Activated CD4-positive, alpha-beta memory T cell treated with anti-CD3 and anti-CD28 coated beads for 36 hours (primary cell): ENCODE measurements at regions of chr15 and their contacts with region 1.

Region 1: DNA sequence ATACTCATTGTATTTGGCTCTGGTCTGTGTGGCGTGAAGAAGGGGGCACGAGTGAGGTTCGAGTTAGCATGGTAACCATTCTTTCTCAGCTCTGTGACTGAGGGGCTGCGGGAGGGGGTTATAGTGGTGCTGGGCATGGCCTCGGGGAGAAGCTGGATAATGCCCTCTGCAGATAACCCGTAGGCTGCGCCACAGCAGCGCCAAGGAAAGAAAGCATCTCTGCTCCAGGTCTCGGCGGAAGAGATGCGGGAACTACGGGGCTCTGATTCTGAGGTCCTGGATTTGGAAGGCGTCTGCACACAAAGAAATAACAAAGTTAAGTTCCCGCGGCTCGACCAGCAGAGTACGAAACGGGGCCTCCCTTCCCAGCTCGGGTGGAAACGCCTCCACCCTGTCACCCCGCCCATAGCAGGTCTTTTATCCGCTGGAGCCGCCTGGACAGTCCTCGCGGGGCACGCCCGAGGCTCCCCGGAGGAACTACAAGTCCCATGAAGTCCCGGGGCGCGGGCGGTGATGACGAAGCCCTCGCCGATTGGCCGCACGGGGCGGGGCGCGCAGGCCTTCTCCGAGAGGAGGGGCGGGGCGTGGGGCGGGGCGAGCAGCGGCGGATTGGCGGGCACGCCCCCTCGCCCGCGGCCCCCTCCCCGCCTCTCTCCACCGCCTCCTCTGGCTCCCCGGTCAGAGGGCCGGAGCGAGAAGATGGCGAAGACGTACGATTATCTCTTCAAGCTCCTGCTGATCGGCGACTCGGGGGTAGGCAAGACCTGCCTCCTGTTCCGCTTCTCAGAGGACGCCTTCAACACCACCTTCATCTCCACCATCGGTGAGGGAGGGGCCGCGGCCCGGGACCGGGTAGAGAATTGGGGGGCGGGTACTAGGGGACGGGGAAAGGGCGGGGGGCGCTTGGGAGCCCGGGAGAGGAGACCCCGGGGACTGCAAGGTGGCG is at the start of gene RAB8B:
- DNase-seq: peak; percentile 99
- H3K4me3 Mint-ChIP-seq: peak within 1 kb of the TSS; percentile 93
- H3K27ac Mint-ChIP-seq: peak within 1 kb of the TSS; percentile 94
- H3K4me1 Mint-ChIP-seq: peaks cover 44% of the 10 kb centered on the region
- H3K27me3 Mint-ChIP-seq: no peaks in the 10 kb centered on the region
- total RNA-seq, gene RAB8B: 109 to 119 TPM

Region 2: DNA sequence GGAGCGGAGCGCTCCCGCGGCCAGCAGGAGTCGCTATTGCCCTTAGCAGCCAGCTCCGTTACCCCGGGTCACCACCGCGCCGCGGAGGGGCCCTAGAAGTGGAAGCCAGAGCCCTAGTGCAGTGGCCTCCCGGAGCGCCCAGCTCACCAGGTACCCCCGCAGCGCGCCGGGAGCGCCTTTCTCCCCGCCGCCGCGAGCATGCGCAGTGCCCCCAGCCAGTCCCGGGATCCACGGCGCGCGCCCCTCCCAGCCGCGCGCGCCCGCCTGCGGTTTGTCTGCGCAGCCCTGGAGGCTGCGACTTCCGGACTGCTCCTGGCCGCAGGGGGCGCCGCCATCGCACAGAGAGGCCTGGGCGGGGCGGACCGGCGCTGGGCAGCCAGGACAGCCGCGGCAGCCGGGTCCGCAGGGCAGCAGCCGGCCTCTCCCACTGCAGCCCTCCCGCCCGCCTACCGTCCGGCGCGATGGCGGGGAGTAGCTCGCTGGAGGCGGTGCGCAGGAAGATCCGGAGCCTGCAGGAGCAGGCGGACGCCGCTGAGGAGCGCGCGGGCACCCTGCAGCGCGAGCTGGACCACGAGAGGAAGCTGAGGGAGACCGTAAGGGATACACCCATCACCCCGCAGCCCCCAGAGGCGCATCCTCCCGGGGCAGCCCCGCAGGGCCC is 141.0 kb before region 1 on chr15:
- CTCF ChIA-PET with region 1: interaction called, 5 read pairs
- POLR2A ChIA-PET with region 1: interaction called, 3 read pairs
- intact Hi-C with region 1: loop called (anchors 2 kb)
- DNase-seq: peak; percentile 89
- H3K4me3 Mint-ChIP-seq: peak overlapping the region; percentile 91
- H3K27ac Mint-ChIP-seq: no peak overlapping the region
- H3K4me1 Mint-ChIP-seq: peaks cover 13% of the 10 kb centered on the region
- H3K27me3 Mint-ChIP-seq: peaks cover 33% of the 10 kb centered on the region

Region 3: GRCh38 chr15:63157118-63157843 is 31.9 kb before region 1 on chr15 and contains the start of gene RPS27L:
- CTCF ChIA-PET with region 1: interaction called, 6 read pairs
- POLR2A ChIA-PET with region 1: interaction called, 15 read pairs
- intact Hi-C with region 1: loop called (anchors 1 kb)
- DNase-seq: peak; percentile 93
- H3K4me3 Mint-ChIP-seq: peak within 1 kb of the TSS; percentile 96
- H3K27ac Mint-ChIP-seq: peak within 1 kb of the TSS; percentile 96
- H3K4me1 Mint-ChIP-seq: peaks cover 17% of the 10 kb centered on the region
- H3K27me3 Mint-ChIP-seq: no peaks in the 10 kb centered on the region
- total RNA-seq, gene RPS27L: 139 to 140 TPM

Region 4: GRCh38 chr15:63203451-63204090 is 14.4 kb after region 1 on chr15:
- CTCF ChIA-PET with region 1: interaction called, 3 read pairs
- POLR2A ChIA-PET with region 1: interaction called, 29 read pairs
- intact Hi-C with region 1: loop called (anchors 1 kb)
- DNase-seq: peak; percentile 73
- H3K4me3 Mint-ChIP-seq: no peak overlapping the region
- H3K27ac Mint-ChIP-seq: no peak overlapping the region
- H3K4me1 Mint-ChIP-seq: peaks cover 92% of the 10 kb centered on the region
- H3K27me3 Mint-ChIP-seq: no peaks in the 10 kb centered on the region

Region 5: GRCh38 chr15:63232405-63232804 is 43.2 kb after region 1 on chr15:
- CTCF ChIA-PET with region 1: interaction called, 4 read pairs
- POLR2A ChIA-PET with region 1: interaction called, 15 read pairs
- intact Hi-C with region 1: loop called (anchors 1 kb)
- DNase-seq: no peak
- H3K4me3 Mint-ChIP-seq: no peak overlapping the region
- H3K27ac Mint-ChIP-seq: peak overlapping the region; percentile 79
- H3K4me1 Mint-ChIP-seq: peaks cover 75% of the 10 kb centered on the region
- H3K27me3 Mint-ChIP-seq: no peaks in the 10 kb centered on the region

Region 6: DNA sequence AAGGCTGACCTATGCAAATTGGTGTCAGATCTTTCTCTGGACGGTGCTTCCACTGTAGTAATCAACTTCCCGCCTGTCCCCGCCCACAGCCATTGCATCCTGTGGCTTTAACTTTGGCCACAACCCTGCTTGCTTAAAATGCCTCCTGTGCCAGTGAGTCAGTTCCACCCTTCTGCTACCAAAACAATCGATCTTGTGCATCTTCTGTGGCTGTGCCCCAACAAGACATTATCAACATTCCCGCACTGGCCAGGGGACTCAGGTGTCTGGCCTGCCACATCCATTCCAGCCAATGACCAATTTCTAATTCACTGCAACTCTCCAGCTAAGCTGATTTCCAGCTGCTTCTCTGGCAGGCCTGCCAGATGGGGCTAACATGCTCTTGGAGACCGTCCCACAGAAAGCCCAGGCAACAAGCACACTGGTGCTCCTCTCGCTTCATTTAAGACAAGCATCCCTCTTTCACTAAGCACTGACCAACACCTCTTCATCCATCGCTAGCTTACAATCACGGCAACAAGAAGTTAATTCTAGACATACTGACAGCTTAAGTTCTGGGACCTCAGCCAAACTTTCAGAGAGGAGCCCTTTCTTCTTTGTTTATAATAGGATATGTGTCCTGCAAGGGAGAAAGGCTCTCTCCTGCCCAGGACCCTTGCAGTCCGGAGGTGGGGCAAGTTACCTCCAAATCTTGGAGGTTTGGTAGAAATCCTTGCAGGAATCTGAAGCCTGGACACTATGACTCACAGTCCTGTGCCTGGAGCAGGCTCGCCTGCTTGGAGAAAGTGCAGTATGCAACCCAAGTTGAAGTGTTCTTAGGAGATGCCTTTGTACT is 185.7 kb after region 1 on chr15:
- CTCF ChIA-PET with region 1: no interaction called
- POLR2A ChIA-PET with region 1: no interaction called
- intact Hi-C with region 1: loop called (anchors 2 kb)
- DNase-seq: peak; percentile 81
- H3K4me3 Mint-ChIP-seq: no peak overlapping the region
- H3K27ac Mint-ChIP-seq: peak overlapping the region; percentile 60
- H3K4me1 Mint-ChIP-seq: peaks cover 41% of the 10 kb centered on the region
- H3K27me3 Mint-ChIP-seq: peaks cover 29% of the 10 kb centered on the region

Region 7: DNA sequence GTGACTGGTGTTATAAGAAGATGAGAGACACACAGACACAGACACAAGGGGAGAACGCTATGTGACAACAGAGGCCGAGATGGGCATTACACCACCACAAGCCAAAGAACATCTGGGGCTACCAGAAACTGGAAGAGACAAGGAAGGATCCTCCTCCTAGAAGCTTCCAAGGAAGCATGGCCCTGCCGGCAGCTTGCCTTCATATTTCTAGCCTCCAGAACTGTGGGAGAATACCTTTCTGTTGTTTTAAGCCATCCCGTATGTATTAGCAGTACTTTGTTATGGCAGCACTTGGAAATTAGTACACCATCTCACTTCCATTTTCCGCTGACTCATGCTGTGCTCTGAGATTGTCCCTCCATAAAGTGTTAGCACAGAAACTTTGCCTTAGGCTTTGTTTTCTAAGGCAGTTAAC is 231.1 kb after region 1 on chr15:
- CTCF ChIA-PET with region 1: no interaction called
- POLR2A ChIA-PET with region 1: no interaction called
- intact Hi-C with region 1: no loop called
- DNase-seq: no peak
- H3K4me3 Mint-ChIP-seq: no peak overlapping the region
- H3K27ac Mint-ChIP-seq: no peak overlapping the region
- H3K4me1 Mint-ChIP-seq: no peaks in the 10 kb centered on the region
- H3K27me3 Mint-ChIP-seq: no peaks in the 10 kb centered on the region

Region 8: GRCh38 chr15:63504247-63504978 is 315.2 kb after region 1 on chr15 and contains the start of gene USP3:
- CTCF ChIA-PET with region 1: no interaction called
- POLR2A ChIA-PET with region 1: interaction called, 4 read pairs
- intact Hi-C with region 1: loop called (anchors 5 kb)
- DNase-seq: peak; percentile 95
- H3K4me3 Mint-ChIP-seq: peak within 1 kb of the TSS; percentile 90
- H3K27ac Mint-ChIP-seq: peak within 1 kb of the TSS; percentile 99
- H3K4me1 Mint-ChIP-seq: peaks cover 80% of the 10 kb centered on the region
- H3K27me3 Mint-ChIP-seq: no peaks in the 10 kb centered on the region
- total RNA-seq, gene USP3: 46.1 to 48.9 TPM